GM13976 (cell line): ENCODE measurements at regions of chr14 and their contacts with region 1.

Region 1: DNA sequence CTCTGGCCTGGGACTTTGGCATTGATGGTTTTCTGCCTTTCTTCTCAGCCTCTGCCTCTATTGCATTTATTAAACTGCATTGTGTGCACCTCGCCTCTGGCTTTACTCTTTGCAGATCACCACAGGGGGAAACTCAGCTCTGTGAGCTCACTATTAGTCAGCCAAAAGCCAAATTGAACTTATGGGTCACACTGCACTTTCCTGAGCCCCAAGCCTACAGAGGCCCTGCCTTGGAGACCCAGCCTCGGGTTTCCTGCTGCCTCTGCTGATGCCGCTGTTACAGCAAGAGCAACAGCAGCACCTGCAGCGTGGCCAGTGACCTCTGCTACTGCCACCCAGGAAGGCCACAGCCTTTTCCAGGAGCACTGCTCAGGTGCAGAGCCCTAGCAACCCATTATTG is 122.5 kb downstream of the DAD1 start:
- DNase-seq: peak; percentile 56
- CTCF ChIP-seq: no peak

Region 2: DNA sequence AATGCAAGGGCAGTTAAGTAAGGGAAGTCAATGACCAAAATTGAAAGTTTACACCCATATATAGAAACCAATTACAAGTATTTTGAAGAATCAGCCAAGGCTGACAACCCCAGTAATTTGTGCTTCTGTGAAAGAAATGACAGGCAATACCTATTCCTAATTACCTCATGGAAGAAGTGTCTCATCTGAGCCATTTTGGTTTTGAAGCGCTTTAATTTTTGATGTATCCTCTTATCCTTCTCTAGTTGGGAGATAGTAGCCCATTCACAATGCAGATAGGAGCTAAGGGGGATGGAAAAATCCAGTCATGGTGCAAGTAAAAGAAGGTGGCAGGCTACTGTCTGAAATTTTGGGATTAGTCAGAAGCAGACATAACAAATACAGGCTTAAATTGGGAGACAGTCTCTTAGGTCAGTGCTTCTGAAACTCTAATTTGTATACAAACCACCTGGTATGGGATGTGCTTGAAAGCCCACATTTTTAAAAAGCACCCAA is 1052.3 kb before region 1 on chr14:
- in situ Hi-C with region 1: no loop called
- DNase-seq: peak; percentile 64
- CTCF ChIP-seq: no peak

Region 3: GRCh38 chr14:22303589-22304195 is 162.8 kb before region 1 on chr14:
- in situ Hi-C with region 1: loop called (anchors 10 kb)
- DNase-seq: peak; percentile 31
- CTCF ChIP-seq: peak; percentile 22

Region 4: GRCh38 chr14:22737052-22737451 is 270.6 kb after region 1 on chr14:
- in situ Hi-C with region 1: no loop called
- DNase-seq: peak; percentile 78
- CTCF ChIP-seq: no peak

Region 5: GRCh38 chr14:22791301-22791700 is 324.8 kb after region 1 on chr14:
- in situ Hi-C with region 1: no loop called
- DNase-seq: no peak
- CTCF ChIP-seq: no peak